Activated naive CD8-positive, alpha-beta T cell treated with anti-CD3 and anti-CD28 coated beads, Interleukin-2, amount 10 ng/mL, durations not matched to agents 7 days and 5 days (primary cell): ENCODE measurements at regions of chr2 and their contacts with region 1.

Region 1: GRCh38 chr2:38377050-38377828 is at the start of gene ATL2:
- DNase-seq: peak; percentile 93
- ATAC-seq: peak; percentile 90
- H3K4me3 Mint-ChIP-seq: peak within 1 kb of the TSS; percentile 95
- H3K27ac Mint-ChIP-seq: peak within 1 kb of the TSS; percentile 90
- H3K4me1 Mint-ChIP-seq: peaks cover 39% of the 10 kb centered on the region
- H3K27me3 Mint-ChIP-seq: no peaks in the 10 kb centered on the region
- total RNA-seq, gene ATL2: 46.0 to 48.8 TPM

Region 2: GRCh38 chr2:38387887-38388286 is 10.6 kb after region 1 on chr2:
- POLR2A ChIA-PET with region 1: interaction called, 11 read pairs
- DNase-seq: no peak
- ATAC-seq: peak; percentile 48
- H3K4me3 Mint-ChIP-seq: peak overlapping the region; percentile 22
- H3K27ac Mint-ChIP-seq: peak overlapping the region; percentile 9
- H3K4me1 Mint-ChIP-seq: peaks cover 12% of the 10 kb centered on the region
- H3K27me3 Mint-ChIP-seq: peaks cover 10% of the 10 kb centered on the region